Transverse colon (tissue), 4 donors: ENCODE measurements at regions of chrX and their contacts with region 1.

Region 1: DNA sequence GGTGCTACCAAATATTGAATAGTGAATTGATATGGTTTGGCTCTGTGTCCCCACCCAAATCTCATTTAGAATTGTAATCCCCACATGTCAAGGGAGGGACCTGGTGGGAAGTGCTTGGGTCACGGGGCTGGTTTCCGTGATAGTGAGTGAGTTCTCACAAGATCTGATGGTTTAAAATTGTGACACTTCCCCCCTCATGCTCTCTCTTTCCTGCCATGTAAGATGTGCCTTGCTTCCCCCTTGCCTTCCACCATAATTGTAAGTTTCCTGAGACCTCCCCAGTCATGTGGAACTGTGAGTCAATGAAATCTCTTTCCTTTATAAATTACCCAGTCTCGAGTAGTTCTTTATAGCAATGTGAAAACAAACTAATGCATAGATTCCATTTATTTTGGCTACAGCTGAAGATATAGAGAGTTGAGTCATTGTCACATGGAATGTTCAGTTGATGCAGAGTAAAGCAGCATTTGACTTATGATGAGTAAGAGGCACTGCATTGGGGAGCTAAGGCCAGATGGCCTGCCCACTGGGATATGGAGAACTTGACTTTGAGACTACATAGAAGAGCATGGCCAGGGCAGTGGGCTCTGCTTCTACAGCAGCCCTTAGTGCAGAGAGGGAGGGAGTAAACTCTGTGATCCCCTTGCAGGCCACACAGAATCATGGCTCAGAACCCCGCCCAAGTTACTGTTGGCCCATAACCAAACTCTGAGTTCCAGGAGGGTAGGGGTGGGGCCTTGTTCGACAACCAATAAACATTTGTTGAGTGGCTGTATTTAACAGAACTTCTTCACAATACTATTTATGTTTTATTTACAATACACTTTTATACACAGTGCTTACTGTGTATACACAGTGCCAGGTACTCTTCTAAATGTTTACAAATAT is 34.2 kb downstream of the RAI2 start:
- DNase-seq: peak; percentile 36
- H3K4me3 ChIP-seq: no peak overlapping the region
- H3K27ac ChIP-seq: no peak overlapping the region
- H3K4me1 ChIP-seq: peaks cover 0 to 16% (median 2%) of the 10 kb centered on the region in 4 donors
- H3K27me3 ChIP-seq: no peaks in the 10 kb centered on the region
- CTCF ChIP-seq: no peak
- EP300 ChIP-seq: no peak
- POLR2A ChIP-seq: no peak

Region 2: DNA sequence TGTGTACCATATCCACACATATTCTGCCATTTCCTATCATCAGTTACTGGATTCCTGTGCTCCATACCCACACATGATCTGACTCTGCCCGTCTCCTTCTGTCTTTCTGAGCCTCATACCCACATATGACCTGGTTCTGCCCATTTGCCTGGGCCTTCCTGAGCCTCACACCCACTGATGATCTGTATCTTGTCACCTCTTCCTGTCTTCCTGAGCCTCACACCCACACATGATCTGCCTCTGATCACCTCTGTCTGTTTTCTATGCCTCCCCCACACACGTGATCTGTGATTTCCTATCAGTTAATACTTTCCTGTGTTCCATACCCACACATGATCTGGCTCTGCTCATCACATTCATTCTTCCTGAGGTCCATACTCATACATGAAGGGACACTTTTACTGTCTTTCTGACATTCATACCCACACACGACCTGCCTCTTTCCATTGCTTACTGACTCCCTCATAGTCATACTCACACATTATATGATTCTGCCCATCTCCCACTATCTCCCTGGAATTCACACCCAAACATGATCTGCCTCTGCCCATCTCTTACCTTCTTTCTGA is 57.1 kb before region 1 on chrX:
- in situ Hi-C with region 1: loop called in 1 of 4 experiments (anchors 10 kb)
- intact Hi-C with region 1: no loop called
- DNase-seq: no peak
- H3K4me3 ChIP-seq: no peak overlapping the region
- H3K27ac ChIP-seq: no peak overlapping the region
- H3K4me1 ChIP-seq: no peaks in the 10 kb centered on the region
- H3K27me3 ChIP-seq: no peaks in the 10 kb centered on the region
- CTCF ChIP-seq: no peak
- EP300 ChIP-seq: no peak
- POLR2A ChIP-seq: no peak

Region 3: DNA sequence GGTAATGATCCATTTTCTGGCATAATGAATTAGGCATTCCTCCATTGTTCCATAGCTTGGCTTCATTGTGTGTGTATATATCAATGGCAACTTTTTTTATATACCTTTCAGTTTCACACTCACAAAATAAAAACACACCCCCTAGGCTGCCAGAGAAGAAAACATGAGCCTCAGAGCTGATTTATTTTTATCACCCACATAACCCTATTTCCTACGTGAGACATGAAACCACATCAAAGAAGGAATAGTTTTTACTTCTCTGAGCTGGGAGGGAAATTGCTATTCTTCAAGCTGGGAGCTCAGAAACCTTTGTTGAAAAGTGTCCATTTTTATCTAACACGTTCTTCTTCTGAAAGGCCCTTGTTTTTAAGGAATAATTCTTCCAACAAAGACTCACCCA is 160.9 kb after region 1 on chrX:
- in situ Hi-C with region 1: no loop called
- intact Hi-C with region 1: no loop called
- DNase-seq: no peak
- H3K4me3 ChIP-seq: no peak overlapping the region
- H3K27ac ChIP-seq: no peak overlapping the region
- H3K4me1 ChIP-seq: no peaks in the 10 kb centered on the region
- H3K27me3 ChIP-seq: no peaks in the 10 kb centered on the region
- CTCF ChIP-seq: no peak
- EP300 ChIP-seq: no peak
- POLR2A ChIP-seq: no peak